Activated CD4-positive, alpha-beta memory T cell treated with anti-CD3 and anti-CD28 coated beads, Interleukin-2, amount 10 ng/mL, durations not matched to agents 7 days and 5 days (primary cell): ENCODE measurements at regions of chr2 and their contacts with region 1.

Region 1: GRCh38 chr2:174553811-174554493 is 43.7 kb downstream of the WIPF1 start:
- DNase-seq: peak; percentile 57
- H3K4me3 Mint-ChIP-seq: peak overlapping the region; percentile 25
- H3K27ac Mint-ChIP-seq: peak overlapping the region; percentile 77
- H3K4me1 Mint-ChIP-seq: peaks cover 43% of the 10 kb centered on the region
- H3K27me3 Mint-ChIP-seq: no peaks in the 10 kb centered on the region

Region 2: DNA sequence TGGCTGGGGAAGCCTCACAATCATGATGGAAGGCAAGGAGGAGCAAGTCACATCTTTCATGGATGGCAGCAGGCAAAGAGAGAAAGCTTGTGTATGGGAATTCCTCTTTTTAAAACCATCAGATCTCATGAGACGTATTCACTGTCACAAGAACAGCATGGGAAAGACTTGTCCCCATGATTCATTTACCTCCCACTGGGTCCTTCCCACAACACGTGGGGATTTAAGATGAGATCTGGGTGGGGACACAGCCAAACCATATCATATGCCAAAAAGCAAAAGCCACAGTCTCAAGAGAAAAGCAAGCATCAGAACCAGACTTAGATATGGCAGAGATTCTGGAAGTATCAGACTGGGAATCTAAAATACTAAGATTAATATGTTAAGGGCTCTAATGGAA is 188.4 kb before region 1 on chr2:
- CTCF ChIA-PET with region 1: no interaction called
- POLR2A ChIA-PET with region 1: no interaction called
- DNase-seq: no peak
- H3K4me3 Mint-ChIP-seq: no peak overlapping the region
- H3K27ac Mint-ChIP-seq: no peak overlapping the region
- H3K4me1 Mint-ChIP-seq: no peaks in the 10 kb centered on the region
- H3K27me3 Mint-ChIP-seq: no peaks in the 10 kb centered on the region

Region 3: GRCh38 chr2:174492963-174493431 is 61.0 kb before region 1 on chr2:
- CTCF ChIA-PET with region 1: interaction called, 3 read pairs
- POLR2A ChIA-PET with region 1: interaction called, 13 read pairs
- DNase-seq: peak; percentile 69
- H3K4me3 Mint-ChIP-seq: peak overlapping the region; percentile 69
- H3K27ac Mint-ChIP-seq: peak overlapping the region; percentile 97
- H3K4me1 Mint-ChIP-seq: peaks cover 61% of the 10 kb centered on the region
- H3K27me3 Mint-ChIP-seq: no peaks in the 10 kb centered on the region

Region 4: GRCh38 chr2:174722942-174723592 is 169.1 kb after region 1 on chr2:
- CTCF ChIA-PET with region 1: no interaction called
- POLR2A ChIA-PET with region 1: no interaction called
- DNase-seq: no peak
- H3K4me3 Mint-ChIP-seq: no peak overlapping the region
- H3K27ac Mint-ChIP-seq: no peak overlapping the region
- H3K4me1 Mint-ChIP-seq: peaks cover 20% of the 10 kb centered on the region
- H3K27me3 Mint-ChIP-seq: peaks cover 18% of the 10 kb centered on the region